ENCODE measurements at regions of chr2 and their contacts with region 1.

Region 1: DNA sequence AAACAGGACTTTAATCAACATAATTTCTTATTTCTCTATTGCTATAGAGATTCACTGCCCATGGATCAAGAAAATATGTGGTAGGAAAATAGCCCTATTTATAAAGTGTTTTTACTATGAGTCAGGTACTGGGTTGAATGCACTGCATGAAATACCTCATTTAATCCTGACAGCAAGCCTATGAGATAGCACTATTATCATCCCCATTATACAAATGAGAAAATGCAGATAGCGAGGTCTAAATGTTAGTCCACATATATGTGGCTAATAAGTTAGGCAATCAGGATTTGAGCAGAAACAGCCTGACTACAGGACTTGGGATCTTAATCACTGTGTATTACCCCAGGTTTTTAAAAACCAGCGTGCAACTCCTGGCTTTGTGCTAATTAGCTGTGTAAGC is 8.5 kb upstream of the LYPD1 start:
- DNase-seq: no peak
- H3K4me3 ChIP-seq: no peak overlapping the region
- H3K27ac ChIP-seq: no peak overlapping the region
- H3K4me1 ChIP-seq: no peaks in the 10 kb centered on the region
- H3K27me3 ChIP-seq: no peaks in the 10 kb centered on the region
- CTCF ChIP-seq: no peak
- EP300 ChIP-seq: no peak
- POLR2A ChIP-seq: no peak

Region 2: DNA sequence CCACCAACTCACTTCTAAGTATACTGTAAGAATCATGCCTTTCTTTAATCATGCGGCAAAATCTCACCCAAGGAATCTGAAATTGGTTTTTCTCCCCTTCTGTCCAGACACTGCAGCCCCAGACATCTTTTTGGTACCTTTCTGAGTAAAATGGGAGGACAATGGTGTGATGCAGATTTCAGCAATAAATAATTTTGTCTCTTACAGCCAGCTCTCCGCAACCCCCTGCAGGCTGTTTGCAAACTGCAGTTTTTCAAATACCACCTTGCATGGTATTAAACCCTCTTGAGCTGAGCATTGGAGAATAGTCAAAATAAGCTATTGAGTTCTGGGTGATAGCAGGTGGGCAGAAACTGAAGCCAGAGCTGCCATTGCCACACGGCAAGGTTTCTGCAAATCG is 229.7 kb before region 1 on chr2:
- intact Hi-C with region 1: no loop called
- DNase-seq: no peak
- H3K4me3 ChIP-seq: no peak overlapping the region
- H3K27ac ChIP-seq: no peak overlapping the region
- H3K4me1 ChIP-seq: no peaks in the 10 kb centered on the region
- H3K27me3 ChIP-seq: no peaks in the 10 kb centered on the region
- CTCF ChIP-seq: no peak
- EP300 ChIP-seq: no peak
- POLR2A ChIP-seq: no peak

Region 3: GRCh38 chr2:132703396-132703795 is 24.9 kb after region 1 on chr2:
- intact Hi-C with region 1: loop called in 1 of 4 experiments (anchors 1 kb)
- DNase-seq: no peak
- H3K4me3 ChIP-seq: no peak overlapping the region
- H3K27ac ChIP-seq: no peak overlapping the region
- H3K4me1 ChIP-seq: no peaks in the 10 kb centered on the region
- H3K27me3 ChIP-seq: no peaks in the 10 kb centered on the region
- CTCF ChIP-seq: no peak
- EP300 ChIP-seq: no peak
- POLR2A ChIP-seq: no peak